ENCODE measurements at regions of chr7 and their contacts with region 1.

Region 1: DNA sequence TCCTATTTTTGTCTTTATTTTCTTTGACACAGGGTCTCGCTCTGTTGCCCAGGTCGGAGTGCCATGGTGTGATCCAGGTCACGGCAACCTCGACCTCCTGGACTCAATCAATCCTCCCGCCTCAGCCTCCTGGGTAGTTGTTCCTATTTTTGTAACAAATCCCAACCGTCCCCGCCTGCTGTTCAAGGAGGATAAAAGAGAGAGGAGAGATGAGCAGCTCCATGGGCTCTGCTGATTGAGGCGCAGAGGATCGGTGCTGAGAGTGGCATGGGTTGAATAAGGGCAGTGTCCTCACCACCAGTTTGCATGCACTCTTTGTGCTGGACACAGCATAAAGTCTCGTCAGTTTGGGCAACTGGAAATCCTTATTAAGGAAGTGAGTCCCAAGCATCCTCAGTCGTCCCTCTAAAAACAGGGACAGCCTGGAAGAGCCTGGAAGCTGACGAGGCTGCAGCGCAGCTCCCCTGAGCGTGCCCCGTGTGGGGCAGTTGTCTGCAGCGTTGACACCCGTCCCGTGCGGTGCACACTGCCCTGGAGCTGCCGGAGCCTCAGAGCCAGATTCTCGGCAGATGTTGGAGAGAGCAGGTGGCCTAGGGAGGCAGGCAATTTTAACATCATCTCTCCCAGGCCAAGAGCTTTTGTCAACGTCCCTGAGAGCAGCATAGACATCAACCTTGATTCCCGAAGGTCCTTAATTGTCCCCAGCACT is 404.2 kb upstream of the RNF32 start:
- DNase-seq: peak; percentile 71

Region 2: DNA sequence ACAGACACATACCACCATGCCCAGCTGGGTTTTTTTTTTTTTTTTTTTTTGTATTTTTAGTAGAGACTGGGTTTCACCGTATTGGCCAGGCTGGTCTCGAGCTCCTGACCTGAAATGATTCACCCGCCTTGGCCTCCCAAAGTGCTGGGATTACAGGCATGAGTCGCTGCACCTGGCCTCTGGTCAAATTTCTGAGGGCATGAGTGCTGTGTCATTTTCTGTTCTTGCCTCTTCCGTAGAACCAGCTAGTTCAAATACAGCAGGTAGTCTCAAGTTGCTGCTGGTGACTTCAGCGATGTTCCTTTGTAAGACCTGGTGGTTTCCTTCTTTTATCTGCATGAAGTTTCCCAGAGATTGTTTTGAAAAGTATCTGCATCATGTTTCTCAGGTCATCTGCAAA is 289.3 kb before region 1 on chr7:
- intact Hi-C with region 1: loop called in 1 of 2 experiments (anchors 5 kb)
- DNase-seq: no peak

Region 3: DNA sequence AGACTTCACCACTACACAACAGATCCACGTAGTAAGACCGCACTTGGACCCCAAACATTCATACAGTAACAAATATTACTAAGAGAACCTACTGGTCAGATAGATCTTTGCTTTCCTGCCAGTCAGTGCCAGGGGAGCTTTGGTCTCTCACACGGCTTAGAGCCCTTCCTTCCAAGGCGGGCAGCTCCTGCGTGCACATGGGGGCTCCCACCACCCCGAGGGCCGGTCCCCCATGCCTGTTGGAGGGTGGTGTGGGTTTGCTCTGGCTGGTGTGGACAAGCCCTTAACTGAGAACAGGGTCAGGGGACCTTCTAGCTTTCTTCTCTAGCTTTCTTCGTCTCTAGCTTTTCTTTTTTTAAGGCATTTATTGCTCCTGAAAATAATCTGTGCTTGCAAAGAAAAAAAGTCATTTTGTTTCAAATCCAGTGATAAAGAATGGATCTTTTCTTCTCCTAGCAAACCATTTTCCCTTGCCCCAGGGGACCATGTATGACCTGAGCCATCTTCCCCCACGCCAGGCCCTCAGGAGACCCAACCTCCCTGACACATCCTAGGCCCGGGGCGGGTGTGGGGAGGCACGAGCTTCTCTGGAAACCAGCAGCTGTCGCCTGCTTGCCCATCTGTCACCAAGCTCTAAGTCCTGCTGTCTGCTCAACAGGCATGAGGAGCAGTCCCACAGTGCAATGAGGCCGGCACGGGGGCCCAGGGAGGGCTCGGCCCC is 1760.2 kb after region 1 on chr7:
- intact Hi-C with region 1: loop called in 1 of 2 experiments (anchors 5 kb)
- DNase-seq: no peak